Heart right ventricle (tissue), 16 donors: ENCODE measurements at regions of chr17 and their contacts with region 1.

Region 1: GRCh38 chr17:74961657-74962490 is 10.7 kb downstream of the HID1 start:
- DNase-seq: peak; percentile 85 to 90
- ATAC-seq: peak; percentile 79 to 93 (median 90)
- H3K4me3 ChIP-seq: no peak overlapping the region
- H3K27ac ChIP-seq: no peak overlapping the region
- H3K4me1 ChIP-seq: peaks cover 0 to 6% (median 4%) of the 10 kb centered on the region in 9 donors
- H3K27me3 ChIP-seq: no peaks in the 10 kb centered on the region
- CTCF ChIP-seq: peak; percentile 67 to 87 (median 83)

Region 2: GRCh38 chr17:74790161-74791054 is 171.5 kb before region 1 on chr17:
- intact Hi-C with region 1: loop called in 2 of 10 experiments (anchors 5 kb)
- DNase-seq: no peak
- ATAC-seq: peak in 2 of 8 donors; percentile 31
- H3K4me3 ChIP-seq: no peak overlapping the region
- H3K27ac ChIP-seq: peak overlapping the region in 1 of 10 donors; percentile 61
- H3K4me1 ChIP-seq: peaks cover 0 to 29% (median 0%) of the 10 kb centered on the region in 9 donors
- H3K27me3 ChIP-seq: no peaks in the 10 kb centered on the region
- CTCF ChIP-seq: no peak

Region 3: DNA sequence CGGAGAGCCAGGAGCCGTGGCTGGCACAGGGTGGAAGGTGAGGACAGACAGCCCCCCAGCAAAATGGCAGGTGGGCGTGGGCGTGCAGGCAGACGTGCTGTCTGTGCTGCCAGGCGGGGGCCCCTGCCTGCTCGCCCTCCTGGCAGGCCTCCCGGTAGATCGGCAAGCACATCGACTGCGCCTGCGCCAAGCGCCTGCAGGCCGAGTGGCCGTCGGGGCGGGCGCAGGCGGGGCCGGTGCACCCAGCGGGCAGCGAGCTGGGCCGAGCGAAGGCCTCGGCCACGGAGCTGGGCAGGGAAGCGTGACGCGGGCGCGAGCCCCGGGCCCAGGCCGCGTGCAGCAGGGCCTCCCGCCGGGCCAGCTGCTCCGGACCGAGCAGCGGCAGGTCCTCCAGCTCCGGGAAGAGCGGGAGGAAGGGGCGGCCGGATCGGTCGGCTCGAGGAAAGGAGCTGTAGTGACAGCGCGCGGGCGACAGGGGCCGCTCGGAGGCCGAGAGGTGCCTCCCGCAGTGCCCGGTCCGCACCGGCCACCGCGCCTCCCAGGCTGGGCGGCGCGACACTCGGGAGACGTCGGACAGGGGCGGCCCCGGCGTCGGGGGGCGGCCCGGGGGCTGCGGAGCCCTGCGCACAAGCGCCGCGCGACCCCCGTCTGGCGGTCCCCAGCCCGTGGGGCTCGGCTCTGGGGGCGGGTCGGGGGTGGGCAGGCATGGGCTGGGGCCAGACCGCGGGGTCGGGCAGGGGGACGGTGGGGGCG is 119.1 kb before region 1 on chr17:
- intact Hi-C with region 1: no loop called
- DNase-seq: peak; percentile 62 to 83
- ATAC-seq: peak; percentile 53 to 86 (median 70)
- H3K4me3 ChIP-seq: peak overlapping the region in 9 of 10 donors; percentile 33 to 51 (median 43)
- H3K27ac ChIP-seq: peak overlapping the region in 4 of 10 donors; percentile 63 to 73 (median 66)
- H3K4me1 ChIP-seq: peaks cover 14 to 30% (median 25%) of the 10 kb centered on the region in 9 donors
- H3K27me3 ChIP-seq: peaks cover 0 to 20% (median 6%) of the 10 kb centered on the region in 7 donors
- CTCF ChIP-seq: peak; percentile 39 to 76 (median 63)

Region 4: GRCh38 chr17:74987418-74987908 is 25.6 kb after region 1 on chr17 and contains the start of gene CDR2L:
- intact Hi-C with region 1: loop called in 1 of 10 experiments (anchors 1 kb)
- DNase-seq: peak; percentile 96 to 97
- ATAC-seq: peak; percentile 87 to 94 (median 92)
- H3K4me3 ChIP-seq: peak within 1 kb of the TSS; percentile 63 to 92 (median 80)
- H3K27ac ChIP-seq: peak within 1 kb of the TSS; percentile 87 to 100 (median 98)
- H3K4me1 ChIP-seq: peaks cover 0 to 52% (median 30%) of the 10 kb centered on the region in 9 donors
- H3K27me3 ChIP-seq: peaks cover 0 to 17% (median 0%) of the 10 kb centered on the region in 7 donors
- CTCF ChIP-seq: no peak
- total RNA-seq, gene CDR2L: 10.8 to 25.3 (median 16.3) TPM

Region 5: GRCh38 chr17:75012346-75013091 is 50.6 kb after region 1 on chr17 and contains the start of gene MRPL58:
- intact Hi-C with region 1: loop called in 8 of 10 experiments (anchors 1 to 10 kb)
- DNase-seq: peak; percentile 84 to 85
- ATAC-seq: peak; percentile 90 to 94 (median 92)
- H3K4me3 ChIP-seq: peak within 1 kb of the TSS; percentile 73 to 97 (median 90)
- H3K27ac ChIP-seq: peak within 1 kb of the TSS; percentile 87 to 96 (median 92)
- H3K4me1 ChIP-seq: peaks cover 12 to 35% (median 28%) of the 10 kb centered on the region in 9 donors
- H3K27me3 ChIP-seq: no peaks in the 10 kb centered on the region
- CTCF ChIP-seq: peak in 8 of 9 donors; percentile 28 to 72 (median 59)
- total RNA-seq, gene MRPL58: 43.7 to 64.1 (median 51.7) TPM

Region 6: GRCh38 chr17:75199886-75200618 is 238.2 kb after region 1 on chr17:
- intact Hi-C with region 1: loop called in 8 of 10 experiments (anchors 1 to 10 kb)
- DNase-seq: no peak
- ATAC-seq: no peak
- H3K4me3 ChIP-seq: no peak overlapping the region
- H3K27ac ChIP-seq: no peak overlapping the region
- H3K4me1 ChIP-seq: peaks cover 0 to 11% (median 6%) of the 10 kb centered on the region in 9 donors
- H3K27me3 ChIP-seq: no peaks in the 10 kb centered on the region
- CTCF ChIP-seq: no peak